Posterior cingulate gyrus (tissue), 11 donors: ENCODE measurements at regions of chr18 and their contacts with region 1.

Region 1: GRCh38 chr18:32470713-32471633 is at the start of gene GAREM1:
- DNase-seq: peak; percentile 90 to 99 (median 94)

Region 2: GRCh38 chr18:32092422-32093101 is 378.4 kb before region 1 on chr18:
- intact Hi-C with region 1: loop called (anchors 10 kb)
- DNase-seq: peak; percentile 97 to 100 (median 100)

Region 3: DNA sequence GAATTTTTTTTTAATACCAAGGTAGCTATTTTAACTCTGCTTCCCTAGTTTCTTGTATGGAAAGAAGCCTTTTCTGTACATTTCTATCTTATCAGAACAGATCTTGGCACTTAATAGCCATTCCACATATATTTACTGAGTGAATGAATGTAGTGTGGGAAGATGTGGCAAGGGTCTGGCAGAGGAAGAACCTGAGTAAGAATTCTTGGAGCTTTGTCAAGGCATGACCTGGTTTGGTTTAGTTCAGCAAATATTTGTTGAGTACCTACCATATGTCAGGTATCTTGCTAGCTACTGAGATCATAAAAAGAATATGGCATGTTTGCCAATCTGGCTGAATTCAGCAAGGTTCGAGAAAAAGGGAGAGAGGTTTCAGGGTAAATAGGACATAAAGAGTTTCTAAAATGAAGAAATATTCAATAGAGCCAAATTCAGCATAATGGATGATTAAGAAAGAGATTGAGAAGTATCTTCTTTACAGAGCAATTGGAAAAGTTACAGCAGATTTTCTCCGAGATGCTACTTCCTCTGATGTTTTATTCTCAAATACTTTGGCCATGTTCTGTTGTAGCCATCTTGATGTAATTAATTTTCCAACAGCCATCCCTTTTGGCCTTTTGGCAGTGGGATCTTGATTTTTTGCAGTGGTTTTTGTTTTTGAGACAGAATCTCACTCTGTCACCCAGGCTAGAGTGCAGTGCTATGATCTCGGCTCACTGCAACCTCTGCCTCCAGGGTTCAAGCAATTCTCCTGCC is 302.8 kb before region 1 on chr18:
- intact Hi-C with region 1: loop called (anchors 10 kb)
- DNase-seq: no peak

Region 4: GRCh38 chr18:32271672-32272208 is 199.2 kb before region 1 on chr18:
- intact Hi-C with region 1: loop called (anchors 1 kb)
- DNase-seq: peak in 3 of 10 donors; percentile 26 to 41 (median 27)

Region 5: DNA sequence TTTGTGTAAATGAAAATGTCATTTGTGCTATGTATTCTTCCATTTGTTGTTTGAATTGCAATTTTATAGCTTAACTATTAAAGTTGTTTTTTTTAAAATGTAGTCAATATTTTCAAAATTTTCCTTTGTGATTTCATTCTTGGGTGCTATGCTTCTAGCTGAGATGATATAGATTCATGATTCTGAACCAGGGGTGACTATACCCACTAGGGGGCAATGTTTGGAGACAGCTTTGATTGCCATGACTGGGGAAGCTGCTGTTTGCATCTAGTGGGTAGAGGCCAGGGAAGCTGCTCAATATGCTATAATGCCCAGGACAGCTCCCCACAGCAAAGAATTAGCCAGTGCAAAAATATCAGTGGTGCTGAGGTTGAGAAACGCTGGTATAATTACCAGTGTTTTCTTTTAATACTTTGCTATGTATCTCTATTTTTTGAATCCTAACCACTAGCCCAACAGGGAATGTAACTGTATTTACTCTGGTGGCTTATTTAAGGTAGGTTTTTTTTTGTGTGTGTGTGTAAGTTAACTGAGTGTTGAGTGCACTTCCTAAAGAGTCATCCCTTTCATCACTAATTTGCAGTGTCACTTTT is 181.4 kb before region 1 on chr18:
- intact Hi-C with region 1: loop called (anchors 1 kb)
- DNase-seq: peak in 3 of 10 donors; percentile 28 to 56 (median 31)

Region 6: DNA sequence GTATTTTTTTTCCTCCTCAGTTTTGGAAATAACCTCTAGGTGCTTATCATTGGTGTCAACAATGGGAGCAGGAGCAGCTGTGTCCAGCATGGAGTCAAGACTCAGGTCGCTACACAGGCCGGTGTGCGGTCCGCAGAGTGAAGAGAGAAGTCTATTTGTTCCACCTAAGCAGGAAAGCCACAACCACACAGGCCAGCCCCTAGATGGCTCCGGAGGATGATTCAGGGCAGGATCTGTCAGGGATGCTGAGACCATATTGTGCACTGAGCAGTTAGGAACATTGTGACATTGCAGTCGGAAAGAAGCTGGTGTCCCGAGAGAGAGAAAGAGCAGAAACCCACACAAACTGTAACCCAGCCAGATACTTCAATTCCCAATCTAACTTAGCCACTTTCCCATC is 137.2 kb before region 1 on chr18:
- intact Hi-C with region 1: loop called (anchors 5 kb)
- DNase-seq: peak in 9 of 10 donors; percentile 22 to 93 (median 49)

Region 7: GRCh38 chr18:32552421-32553030 is 81.6 kb after region 1 on chr18:
- intact Hi-C with region 1: loop called (anchors 10 kb)
- DNase-seq: peak in 6 of 10 donors; percentile 32 to 82 (median 52)